ENCODE measurements at regions of chr12 and their contacts with region 1.

Region 1: GRCh38 chr12:50174971-50175715 is 8.0 kb upstream of the CERS5 start:
- DNase-seq: peak in 1 of 5 donors; percentile 22
- ATAC-seq: peak in 1 of 4 donors; percentile 46
- H3K4me3 ChIP-seq: no peak overlapping the region
- H3K27ac ChIP-seq: no peak overlapping the region
- H3K4me1 ChIP-seq: no peaks in the 10 kb centered on the region
- H3K27me3 ChIP-seq: no peaks in the 10 kb centered on the region
- CTCF ChIP-seq: peak; percentile 56 to 83 (median 68)
- POLR2A ChIP-seq: no peak

Region 2: GRCh38 chr12:50084775-50085614 is 90.1 kb before region 1 on chr12 and contains the start of gene SMARCD1:
- intact Hi-C with region 1: loop called in 4 of 10 experiments (anchors 2 to 5 kb)
- DNase-seq: peak; percentile 92 to 97 (median 95)
- ATAC-seq: peak; percentile 95 to 97 (median 96)
- H3K4me3 ChIP-seq: peak within 1 kb of the TSS; percentile 80 to 99 (median 94)
- H3K27ac ChIP-seq: peak within 1 kb of the TSS; percentile 90 to 100 (median 98)
- H3K4me1 ChIP-seq: peaks cover 0 to 29% (median 14%) of the 10 kb centered on the region in 12 donors
- H3K27me3 ChIP-seq: no peaks in the 10 kb centered on the region
- CTCF ChIP-seq: peak in 10 of 12 donors; percentile 19 to 83 (median 66)
- POLR2A ChIP-seq: no peak
- total RNA-seq, gene SMARCD1: 13.6 to 35.7 (median 22.0) TPM

Region 3: GRCh38 chr12:50111693-50112455 is 63.3 kb before region 1 on chr12 and contains the start of gene COX14:
- intact Hi-C with region 1: loop called in 1 of 10 experiments (anchors 10 kb)
- DNase-seq: peak; percentile 99
- ATAC-seq: peak; percentile 89 to 94 (median 92)
- H3K4me3 ChIP-seq: peak within 1 kb of the TSS; percentile 66 to 99 (median 89)
- H3K27ac ChIP-seq: peak within 1 kb of the TSS; percentile 90 to 100 (median 96)
- H3K4me1 ChIP-seq: peaks cover 0 to 62% (median 48%) of the 10 kb centered on the region in 12 donors
- H3K27me3 ChIP-seq: no peaks in the 10 kb centered on the region
- CTCF ChIP-seq: peak; percentile 87 to 99 (median 94)
- POLR2A ChIP-seq: peak in 1 of 2 donors; percentile 97
- total RNA-seq, gene COX14: 134 to 217 (median 154) TPM

Region 4: GRCh38 chr12:50132505-50133135 is 42.5 kb before region 1 on chr12:
- intact Hi-C with region 1: loop called in 4 of 10 experiments (anchors 2 to 5 kb)
- DNase-seq: no peak
- ATAC-seq: no peak
- H3K4me3 ChIP-seq: no peak overlapping the region
- H3K27ac ChIP-seq: no peak overlapping the region
- H3K4me1 ChIP-seq: peaks cover 0 to 37% (median 10%) of the 10 kb centered on the region in 12 donors
- H3K27me3 ChIP-seq: no peaks in the 10 kb centered on the region
- CTCF ChIP-seq: peak in 11 of 12 donors; percentile 20 to 73 (median 41)
- POLR2A ChIP-seq: no peak

Region 5: GRCh38 chr12:50488801-50489200 is 313.7 kb after region 1 on chr12:
- intact Hi-C with region 1: no loop called
- DNase-seq: no peak
- ATAC-seq: no peak
- H3K4me3 ChIP-seq: no peak overlapping the region
- H3K27ac ChIP-seq: no peak overlapping the region
- H3K4me1 ChIP-seq: no peaks in the 10 kb centered on the region
- H3K27me3 ChIP-seq: no peaks in the 10 kb centered on the region
- CTCF ChIP-seq: no peak
- POLR2A ChIP-seq: no peak

Measured in heart left ventricle (tissue), 16 donors.